CD8-positive, alpha-beta T cell (primary cell): ENCODE measurements at regions of chr17 and their contacts with region 1.

Region 1: DNA sequence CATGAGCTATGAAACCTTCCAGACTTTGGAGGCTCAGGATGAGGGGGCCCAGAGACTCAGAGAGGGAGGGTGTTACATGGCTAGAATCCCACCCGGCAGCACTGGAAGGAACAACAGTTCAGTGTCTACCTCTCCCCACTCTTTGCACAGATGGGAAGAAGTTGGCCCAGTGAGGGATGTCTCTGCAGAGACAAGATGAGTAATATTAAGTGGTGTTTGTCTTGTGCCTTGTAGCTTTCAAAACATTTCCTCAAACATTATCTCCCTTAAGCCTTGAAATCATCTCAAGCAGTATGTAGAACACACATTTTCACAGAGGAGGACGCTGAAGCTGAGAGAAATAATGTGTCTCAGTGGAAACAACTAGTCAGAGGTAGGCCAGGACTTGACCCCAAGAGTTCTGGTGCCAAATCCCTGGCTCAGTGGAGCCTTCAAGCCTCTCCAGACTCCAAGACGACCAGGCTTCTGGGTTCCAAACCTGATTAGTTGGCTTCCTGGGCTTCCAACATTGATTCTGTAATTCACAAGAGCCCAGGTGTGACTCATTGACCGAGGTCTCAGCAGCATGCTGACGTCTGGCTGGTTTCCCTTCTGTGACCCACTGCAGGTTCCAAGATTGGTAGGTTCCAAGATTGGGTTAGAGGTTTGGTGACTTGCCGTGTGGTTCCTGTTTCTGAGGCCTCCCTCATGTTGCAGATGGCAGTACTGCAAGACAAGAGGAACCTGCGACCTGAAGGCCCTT is 7.4 kb downstream of the RNF112 start:
- DNase-seq: peak in 2 of 9 experiments; percentile 14 to 26
- ATAC-seq: peak; percentile 23
- H3K4me3 ChIP-seq: no peak overlapping the region
- H3K4me3 Mint-ChIP-seq: no peak overlapping the region
- H3K27ac ChIP-seq: no peak overlapping the region
- H3K27ac Mint-ChIP-seq: no peak overlapping the region
- H3K4me1 ChIP-seq: no peaks in the 10 kb centered on the region
- H3K4me1 Mint-ChIP-seq: no peaks in the 10 kb centered on the region
- H3K27me3 ChIP-seq: no peaks in the 10 kb centered on the region
- H3K27me3 Mint-ChIP-seq: peaks cover 4% of the 10 kb centered on the region
- CTCF ChIP-seq: no peak

Region 2: GRCh38 chr17:19237389-19238166 is 180.8 kb before region 1 on chr17:
- CTCF ChIA-PET with region 1: no interaction called
- POLR2A ChIA-PET with region 1: no interaction called
- intact Hi-C with region 1: no loop called
- DNase-seq: peak in 2 of 9 experiments; percentile 7 to 58
- ATAC-seq: no peak
- H3K4me3 ChIP-seq: peak overlapping the region; percentile 62
- H3K4me3 Mint-ChIP-seq: peak overlapping the region; percentile 87
- H3K27ac ChIP-seq: no peak overlapping the region
- H3K27ac Mint-ChIP-seq: peak overlapping the region; percentile 52
- H3K4me1 ChIP-seq: peaks cover 11% of the 10 kb centered on the region
- H3K4me1 Mint-ChIP-seq: peaks cover 4% of the 10 kb centered on the region
- H3K27me3 ChIP-seq: peaks cover 7 to 8% of the 10 kb centered on the region in 2 experiments
- H3K27me3 Mint-ChIP-seq: no peaks in the 10 kb centered on the region
- CTCF ChIP-seq: no peak

Region 3: GRCh38 chr17:19470532-19471261 is 52.3 kb after region 1 on chr17:
- CTCF ChIA-PET with region 1: no interaction called
- POLR2A ChIA-PET with region 1: no interaction called
- intact Hi-C with region 1: loop called in 1 of 2 experiments (anchors 10 kb)
- DNase-seq: no peak
- ATAC-seq: no peak
- H3K4me3 ChIP-seq: no peak overlapping the region
- H3K4me3 Mint-ChIP-seq: no peak overlapping the region
- H3K27ac ChIP-seq: no peak overlapping the region
- H3K27ac Mint-ChIP-seq: no peak overlapping the region
- H3K4me1 ChIP-seq: no peaks in the 10 kb centered on the region
- H3K4me1 Mint-ChIP-seq: no peaks in the 10 kb centered on the region
- H3K27me3 ChIP-seq: no peaks in the 10 kb centered on the region
- H3K27me3 Mint-ChIP-seq: peaks cover 3% of the 10 kb centered on the region
- CTCF ChIP-seq: no peak